ENCODE measurements at regions of chr10 and their contacts with region 1.

Region 1: GRCh38 chr10:127853868-127854768 is 38.6 kb downstream of the CLRN3 start:
- DNase-seq: peak; percentile 49 to 57
- H3K4me3 ChIP-seq: no peak overlapping the region
- H3K4me3 Mint-ChIP-seq: no peak overlapping the region
- H3K27ac Mint-ChIP-seq: no peak overlapping the region
- H3K4me1 ChIP-seq: 0 out of 2 replicates have a peak, but pooled peaks cover 3% of the 10 kb centered on the region
- H3K4me1 Mint-ChIP-seq: no peaks in the 10 kb centered on the region
- H3K27me3 ChIP-seq: no peaks in the 10 kb centered on the region; the same call in 1 of the 2 replicates
- H3K27me3 Mint-ChIP-seq: peaks cover 8% of the 10 kb centered on the region
- CTCF ChIP-seq: peak; percentile 68 to 83

Region 2: DNA sequence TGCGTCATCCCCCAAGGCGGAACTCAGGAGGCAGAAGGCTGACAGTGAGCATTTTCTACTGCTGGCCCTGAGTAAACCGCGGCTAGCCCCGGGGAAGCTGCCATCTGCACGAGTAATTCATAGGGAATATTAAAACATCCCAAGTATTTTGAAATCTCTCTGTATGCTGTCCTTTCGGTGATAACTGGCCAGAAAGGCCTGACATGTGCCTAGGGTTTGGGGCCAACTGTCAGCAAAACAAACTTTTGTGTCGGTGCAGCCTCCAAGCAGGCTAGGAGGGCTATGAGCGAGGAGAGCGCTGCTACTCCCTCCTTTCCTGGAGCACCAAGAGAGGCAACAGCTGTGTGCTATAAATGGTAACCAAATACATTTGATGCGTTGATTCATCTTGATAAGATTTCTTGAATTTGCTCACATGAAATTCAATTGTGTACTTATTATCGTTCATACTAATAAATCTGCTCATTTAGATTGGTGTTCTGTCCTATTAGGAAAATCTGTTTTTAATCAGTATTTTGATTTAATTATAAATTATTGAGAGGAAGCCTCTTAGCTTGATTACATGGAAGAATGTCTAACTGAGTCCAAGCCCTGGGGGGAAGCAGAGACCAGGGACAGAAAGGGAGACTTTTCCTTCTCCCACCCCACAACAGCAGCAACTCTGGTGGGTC is 429.4 kb before region 1 on chr10:
- CTCF ChIA-PET with region 1: no interaction called
- POLR2A ChIA-PET with region 1: no interaction called
- intact Hi-C with region 1: no loop called
- DNase-seq: no peak
- H3K4me3 ChIP-seq: no peak overlapping the region
- H3K4me3 Mint-ChIP-seq: no peak overlapping the region
- H3K27ac Mint-ChIP-seq: no peak overlapping the region
- H3K4me1 ChIP-seq: no peaks in the 10 kb centered on the region
- H3K4me1 Mint-ChIP-seq: no peaks in the 10 kb centered on the region
- H3K27me3 ChIP-seq: no peaks in the 10 kb centered on the region
- H3K27me3 Mint-ChIP-seq: no peaks in the 10 kb centered on the region
- CTCF ChIP-seq: no peak

Region 3: GRCh38 chr10:127492607-127493250 is 361.4 kb before region 1 on chr10:
- CTCF ChIA-PET with region 1: no interaction called
- POLR2A ChIA-PET with region 1: no interaction called
- intact Hi-C with region 1: loop called (anchors 1 kb)
- DNase-seq: peak in 1 of 2 experiments; percentile 32
- H3K4me3 ChIP-seq: no peak overlapping the region
- H3K4me3 Mint-ChIP-seq: no peak overlapping the region
- H3K27ac Mint-ChIP-seq: no peak overlapping the region
- H3K4me1 ChIP-seq: no peaks in the 10 kb centered on the region
- H3K4me1 Mint-ChIP-seq: no peaks in the 10 kb centered on the region
- H3K27me3 ChIP-seq: no peaks in the 10 kb centered on the region; the same call in 1 of the 2 replicates
- H3K27me3 Mint-ChIP-seq: peaks cover 18% of the 10 kb centered on the region
- CTCF ChIP-seq: peak; percentile 51 to 70

Region 4: DNA sequence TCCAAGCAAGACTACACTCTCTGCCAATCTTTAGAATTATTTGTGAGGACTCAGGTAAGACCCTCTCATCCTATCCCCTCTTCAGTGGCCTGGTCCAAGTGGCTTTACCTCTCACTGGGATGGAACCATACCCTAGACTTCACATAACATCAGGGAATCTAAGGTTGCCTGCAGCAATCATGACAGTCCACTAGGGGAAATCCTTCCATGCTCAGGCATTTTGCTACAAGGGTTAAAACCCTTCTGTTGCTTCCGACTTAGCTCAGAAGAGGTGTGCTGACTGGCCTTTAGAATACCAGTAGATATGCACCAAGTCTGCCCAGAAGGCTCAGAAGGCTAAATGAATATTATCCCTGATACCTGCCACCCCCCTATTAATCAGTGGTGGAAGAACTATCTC is 329.9 kb before region 1 on chr10:
- CTCF ChIA-PET with region 1: no interaction called
- POLR2A ChIA-PET with region 1: no interaction called
- intact Hi-C with region 1: no loop called
- DNase-seq: peak in 1 of 2 experiments; percentile 2
- H3K4me3 ChIP-seq: no peak overlapping the region
- H3K4me3 Mint-ChIP-seq: no peak overlapping the region
- H3K27ac Mint-ChIP-seq: no peak overlapping the region
- H3K4me1 ChIP-seq: no peaks in the 10 kb centered on the region
- H3K4me1 Mint-ChIP-seq: no peaks in the 10 kb centered on the region
- H3K27me3 ChIP-seq: no peaks in the 10 kb centered on the region
- H3K27me3 Mint-ChIP-seq: peaks cover 38% of the 10 kb centered on the region
- CTCF ChIP-seq: peak in 1 of 2 experiments; percentile 25